B cell (primary cell): ENCODE measurements at regions of chr12 and their contacts with region 1.

Region 1: GRCh38 chr12:123388177-123388947 is 4.4 kb downstream of the KMT5A start:
- DNase-seq: peak; percentile 85
- ATAC-seq: peak; percentile 62
- H3K4me3 ChIP-seq: peak overlapping the region; percentile 60 to 78 (median 63)
- H3K4me3 Mint-ChIP-seq: peak overlapping the region; percentile 91
- H3K27ac ChIP-seq: peak overlapping the region; percentile 74 to 80
- H3K27ac Mint-ChIP-seq: peak overlapping the region; percentile 93
- H3K4me1 ChIP-seq: peaks cover 22 to 36% of the 10 kb centered on the region in 2 donors
- H3K4me1 Mint-ChIP-seq: peaks cover 38% of the 10 kb centered on the region
- H3K27me3 ChIP-seq: no peaks in the 10 kb centered on the region
- H3K27me3 Mint-ChIP-seq: no peaks in the 10 kb centered on the region
- CTCF ChIP-seq: peak; percentile 9

Region 2: DNA sequence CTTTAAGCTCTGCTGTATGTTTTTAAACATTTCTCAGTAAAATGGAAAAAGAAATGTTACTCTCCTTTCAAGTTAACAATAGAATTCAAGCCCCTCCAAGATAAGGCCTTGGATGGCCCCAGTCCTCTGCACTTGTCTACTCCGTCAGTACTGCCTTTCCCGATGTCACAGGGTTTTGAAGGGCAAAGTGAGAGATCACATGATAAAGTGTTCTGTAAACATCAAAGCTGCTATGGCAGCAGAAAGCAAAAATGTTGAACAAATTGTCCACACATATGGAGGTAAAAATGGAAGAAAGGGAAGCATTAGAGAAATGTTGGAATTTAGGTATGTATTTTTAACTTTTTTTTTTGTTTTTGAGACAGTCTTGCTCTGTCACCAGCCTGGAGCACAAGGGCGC is 83.2 kb before region 1 on chr12:
- CTCF ChIA-PET with region 1: no interaction called
- POLR2A ChIA-PET with region 1: no interaction called
- intact Hi-C with region 1: no loop called
- DNase-seq: no peak
- ATAC-seq: no peak
- H3K4me3 ChIP-seq: no peak overlapping the region
- H3K4me3 Mint-ChIP-seq: no peak overlapping the region
- H3K27ac ChIP-seq: no peak overlapping the region
- H3K27ac Mint-ChIP-seq: no peak overlapping the region
- H3K4me1 ChIP-seq: no peaks in the 10 kb centered on the region
- H3K4me1 Mint-ChIP-seq: no peaks in the 10 kb centered on the region
- H3K27me3 ChIP-seq: no peaks in the 10 kb centered on the region
- H3K27me3 Mint-ChIP-seq: no peaks in the 10 kb centered on the region
- CTCF ChIP-seq: no peak

Region 3: GRCh38 chr12:123337070-123337469 is 51.3 kb before region 1 on chr12:
- CTCF ChIA-PET with region 1: no interaction called
- POLR2A ChIA-PET with region 1: no interaction called
- intact Hi-C with region 1: no loop called
- DNase-seq: no peak
- ATAC-seq: no peak
- H3K4me3 ChIP-seq: no peak overlapping the region
- H3K4me3 Mint-ChIP-seq: no peak overlapping the region
- H3K27ac ChIP-seq: no peak overlapping the region
- H3K27ac Mint-ChIP-seq: no peak overlapping the region
- H3K4me1 ChIP-seq: no peaks in the 10 kb centered on the region
- H3K4me1 Mint-ChIP-seq: peaks cover 5% of the 10 kb centered on the region
- H3K27me3 ChIP-seq: no peaks in the 10 kb centered on the region
- H3K27me3 Mint-ChIP-seq: no peaks in the 10 kb centered on the region
- CTCF ChIP-seq: no peak

Region 4: GRCh38 chr12:123436017-123436964 is 47.9 kb after region 1 on chr12 and contains the start of gene RILPL2:
- CTCF ChIA-PET with region 1: interaction called, 3 read pairs
- POLR2A ChIA-PET with region 1: interaction called, 6 read pairs
- intact Hi-C with region 1: loop called (anchors 5 kb)
- DNase-seq: peak; percentile 93
- ATAC-seq: peak; percentile 86
- H3K4me3 ChIP-seq: peak within 1 kb of the TSS; percentile 79 to 99 (median 97)
- H3K4me3 Mint-ChIP-seq: peak within 1 kb of the TSS; percentile 96
- H3K27ac ChIP-seq: peak within 1 kb of the TSS; percentile 91 to 95
- H3K27ac Mint-ChIP-seq: peak within 1 kb of the TSS; percentile 96
- H3K4me1 ChIP-seq: peaks cover 30 to 46% of the 10 kb centered on the region in 2 donors
- H3K4me1 Mint-ChIP-seq: peaks cover 47% of the 10 kb centered on the region
- H3K27me3 ChIP-seq: no peaks in the 10 kb centered on the region
- H3K27me3 Mint-ChIP-seq: no peaks in the 10 kb centered on the region
- CTCF ChIP-seq: no peak
- total RNA-seq, gene RILPL2: 12.6 and 13.0 TPM in 2 replicates